Posterior vena cava (tissue), 2 donors: ENCODE measurements at regions of chr6 and their contacts with region 1.

Region 1: DNA sequence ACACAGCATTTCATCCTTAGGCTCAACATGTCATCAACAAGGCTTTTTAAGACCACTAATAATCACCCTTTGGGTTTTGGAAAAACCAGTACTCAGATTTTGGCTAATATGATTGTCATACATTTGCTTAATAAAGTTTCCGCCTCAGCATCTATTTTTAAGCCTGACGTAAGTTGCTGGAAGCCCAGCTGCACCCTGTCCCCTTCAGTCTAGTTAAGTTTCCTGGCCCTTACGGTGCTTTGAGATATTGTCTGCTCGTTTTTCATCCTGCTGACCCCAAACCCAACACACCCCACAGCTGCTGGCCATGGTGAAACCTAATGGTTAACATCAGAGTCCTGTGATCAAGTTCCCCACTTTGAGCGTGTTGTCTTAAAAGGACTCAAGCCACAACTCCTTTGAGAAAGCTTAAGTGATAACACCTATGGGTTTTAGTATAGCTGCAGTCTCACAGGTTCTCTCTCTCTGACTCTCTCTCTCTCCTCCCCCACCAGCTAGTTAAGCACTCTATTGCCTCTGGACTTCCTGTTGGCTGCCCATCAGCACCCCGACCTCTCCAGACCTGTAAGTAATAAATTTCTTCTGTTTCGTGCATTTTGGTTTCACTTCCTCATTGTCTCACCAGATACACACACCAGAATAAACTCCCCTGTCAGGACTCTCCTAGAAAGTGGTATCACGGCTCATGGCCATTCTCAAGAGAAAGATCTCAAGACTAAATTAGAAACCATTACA is 802.0 kb downstream of the C6orf118 start:
- DNase-seq: no peak

Region 2: DNA sequence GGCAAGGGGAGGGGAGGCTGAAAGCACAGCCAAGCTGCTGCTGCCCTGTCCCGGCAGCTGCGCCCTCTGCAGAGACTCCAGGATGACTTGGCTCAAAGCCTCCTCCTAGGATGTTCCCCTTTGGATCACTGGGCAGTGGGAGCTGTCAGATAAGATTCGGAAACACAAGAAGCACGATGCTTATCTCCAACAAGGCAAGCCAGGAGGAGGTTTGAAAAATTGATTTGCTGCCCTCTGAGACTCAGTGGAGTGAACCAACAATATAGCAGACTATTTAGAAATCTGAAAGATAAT is 25.6 kb after region 1 on chr6:
- intact Hi-C with region 1: no loop called
- DNase-seq: no peak

Region 3: GRCh38 chr6:164563924-164564323 is 56.6 kb after region 1 on chr6:
- intact Hi-C with region 1: no loop called
- DNase-seq: no peak

Region 4: GRCh38 chr6:164741938-164742451 is 234.6 kb after region 1 on chr6:
- intact Hi-C with region 1: no loop called
- DNase-seq: no peak

Region 5: GRCh38 chr6:165218829-165219228 is 711.5 kb after region 1 on chr6:
- intact Hi-C with region 1: loop called in 1 of 2 experiments (anchors 5 kb)
- DNase-seq: no peak